ENCODE measurements at regions of chr16 and their contacts with region 1.

Region 1: DNA sequence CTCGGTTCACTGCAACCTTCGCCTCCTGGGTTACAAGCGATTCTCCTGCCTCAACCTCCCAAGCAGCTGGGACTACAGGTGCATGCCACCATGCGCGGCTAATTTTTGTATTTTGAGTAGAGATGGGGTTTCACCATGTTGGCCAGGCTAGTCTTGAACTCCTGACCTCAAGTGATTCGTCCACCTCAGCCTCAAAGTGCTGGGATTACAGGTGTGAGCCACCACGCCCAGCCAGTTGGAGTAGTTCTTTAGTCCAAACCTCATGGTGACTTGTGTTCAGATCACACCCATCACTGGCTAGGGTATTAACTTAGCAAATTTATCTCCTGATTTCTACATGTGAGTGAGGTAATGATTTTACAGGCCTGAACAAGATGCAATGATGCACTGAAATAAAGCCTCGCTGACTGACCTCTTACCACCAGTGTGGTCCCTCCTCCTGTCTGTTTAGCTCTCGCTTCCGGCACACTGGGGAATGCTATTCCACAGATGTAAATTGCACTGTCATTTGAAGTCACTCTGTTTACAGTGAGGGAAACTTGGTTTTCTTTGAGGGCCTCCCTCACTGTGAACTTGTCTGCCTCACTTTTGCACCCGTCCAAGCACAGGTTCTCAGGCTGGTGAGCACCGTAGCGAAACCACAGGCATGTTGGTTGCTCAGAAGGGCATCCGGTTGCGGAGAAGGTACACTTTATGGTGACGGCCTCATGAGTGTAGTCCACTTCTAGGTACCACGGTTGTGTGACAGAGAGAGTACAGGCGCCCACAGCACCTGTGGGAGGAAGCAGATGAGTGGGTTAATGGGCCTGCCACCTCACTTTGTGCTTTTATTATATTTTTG is 5.5 kb downstream of the IGSF6 start:
- DNase-seq: peak; percentile 50 to 83 (median 67)
- ATAC-seq: peak; percentile 82 to 90 (median 87)
- H3K4me3 ChIP-seq: peak overlapping the region; percentile 7 to 10
- H3K4me3 Mint-ChIP-seq: peak overlapping the region; percentile 54 to 69 (median 67)
- H3K27ac ChIP-seq: peak overlapping the region; percentile 88
- H3K27ac Mint-ChIP-seq: peak overlapping the region; percentile 96
- H3K4me1 ChIP-seq: peaks cover 33 to 58% of the 10 kb centered on the region in 2 experiments
- H3K4me1 Mint-ChIP-seq: peaks cover 52 to 63% (median 60%) of the 10 kb centered on the region in 3 donors
- H3K27me3 ChIP-seq: no peaks in the 10 kb centered on the region
- H3K27me3 Mint-ChIP-seq: no peaks in the 10 kb centered on the region

Region 2: DNA sequence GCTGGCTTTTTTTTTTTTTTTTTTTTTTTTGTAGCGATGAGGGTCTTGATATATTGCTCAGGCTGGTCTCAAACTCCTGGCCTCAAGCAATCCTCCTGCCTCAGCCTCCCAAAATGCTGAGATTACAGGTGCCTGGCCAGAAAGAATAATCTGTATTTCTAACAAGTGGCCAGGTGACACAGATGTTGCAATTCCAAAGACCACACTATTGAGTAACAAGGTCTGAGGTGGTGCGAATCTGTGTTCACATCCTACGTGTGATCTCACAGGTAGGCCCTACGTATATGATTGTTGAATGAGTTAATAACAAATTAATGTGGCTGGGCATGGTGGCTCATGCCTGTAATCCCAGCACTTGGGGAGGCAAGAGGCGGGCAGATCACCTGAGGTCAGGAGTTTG is 50.1 kb after region 1 on chr16:
- CTCF ChIA-PET with region 1: no interaction called
- POLR2A ChIA-PET with region 1: interaction called in 1 of 2 experiments, 13 read pairs
- DNase-seq: no peak
- ATAC-seq: no peak
- H3K4me3 ChIP-seq: no peak overlapping the region
- H3K4me3 Mint-ChIP-seq: no peak overlapping the region
- H3K27ac ChIP-seq: no peak overlapping the region
- H3K27ac Mint-ChIP-seq: no peak overlapping the region
- H3K4me1 ChIP-seq: no peaks in the 10 kb centered on the region
- H3K4me1 Mint-ChIP-seq: no peaks in the 10 kb centered on the region
- H3K27me3 ChIP-seq: peaks cover 0 to 5% of the 10 kb centered on the region in 2 experiments
- H3K27me3 Mint-ChIP-seq: peaks cover 0 to 4% of the 10 kb centered on the region in 2 donors